Gastrocnemius medialis (tissue), 4 donors: ENCODE measurements at regions of chrX and their contacts with region 1.

Region 1: DNA sequence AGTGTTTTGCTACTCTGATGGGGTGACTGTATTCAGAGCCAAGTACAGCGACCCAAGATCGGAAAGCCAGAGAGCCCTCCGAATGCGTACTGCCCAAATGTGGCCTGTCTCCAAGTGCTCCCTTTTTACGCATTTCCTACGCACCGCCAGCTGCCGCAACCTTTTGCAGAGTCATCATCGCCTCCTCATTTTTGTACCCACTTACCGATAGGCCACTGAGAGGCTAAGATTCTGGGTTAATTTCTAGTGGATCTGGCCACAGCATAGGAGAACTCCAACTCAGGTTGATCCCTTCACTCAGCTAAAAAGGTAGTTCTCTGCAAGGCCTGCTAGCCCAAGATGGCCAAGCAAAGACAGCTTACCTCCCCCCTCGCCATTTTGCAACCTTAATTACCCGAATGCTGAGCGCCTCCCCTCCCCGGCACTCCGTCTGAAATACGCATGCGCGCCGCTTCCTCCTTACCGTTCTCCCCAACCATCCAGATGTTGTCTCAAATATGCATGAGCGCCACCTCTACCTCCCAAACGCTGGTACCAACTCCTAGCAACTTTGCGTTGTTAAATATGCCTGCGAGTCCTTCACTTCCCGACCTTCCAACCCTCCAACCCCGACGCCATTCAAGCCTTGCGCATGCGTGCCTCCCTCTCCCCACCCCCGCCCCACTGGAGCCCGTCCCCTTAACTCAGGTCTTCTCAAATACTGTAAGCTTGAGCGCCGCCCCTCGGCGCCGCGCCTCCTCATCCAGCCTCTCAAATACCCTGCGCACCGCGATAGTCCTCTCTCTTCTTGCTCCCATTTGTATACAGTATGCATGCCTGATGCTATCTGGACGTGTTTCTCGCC is 11.8 kb upstream of the ZCCHC13 start:
- DNase-seq: peak; percentile 75 to 89
- ATAC-seq: peak; percentile 80 to 82
- H3K4me3 ChIP-seq: peak overlapping the region; percentile 61 to 71 (median 67)
- H3K27ac ChIP-seq: peak overlapping the region; percentile 86 to 98 (median 93)
- H3K4me1 ChIP-seq: peaks cover 0 to 5% of the 10 kb centered on the region in 2 donors
- H3K27me3 ChIP-seq: no peaks in the 10 kb centered on the region
- CTCF ChIP-seq: peak in 1 of 5 experiments; percentile 11
- POLR2A ChIP-seq: peak; percentile 66 to 79

Region 2: DNA sequence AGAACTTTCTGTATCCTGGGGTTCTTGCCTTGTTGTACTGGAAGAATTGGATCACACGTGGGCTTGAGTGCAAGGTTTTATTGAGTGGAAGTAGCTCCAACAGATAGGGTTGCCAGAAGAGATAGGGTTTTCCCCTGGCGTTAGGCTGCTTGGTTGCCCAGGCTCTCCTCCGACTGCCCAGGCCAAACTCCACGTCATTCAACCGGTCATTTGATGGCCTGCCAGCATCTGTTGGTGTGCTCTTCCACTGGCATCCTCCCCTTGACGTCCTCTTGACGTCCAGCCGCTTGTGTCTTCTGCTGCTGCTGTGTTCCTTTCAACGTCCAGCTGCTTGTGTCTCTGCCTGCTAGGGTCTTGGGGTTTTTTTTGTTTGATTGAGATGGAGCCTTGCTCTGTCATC is 328.5 kb before region 1 on chrX:
- in situ Hi-C with region 1: no loop called
- intact Hi-C with region 1: loop called (anchors 5 kb)
- DNase-seq: peak; percentile 49 to 81
- ATAC-seq: peak; percentile 92 to 95
- H3K4me3 ChIP-seq: no peak overlapping the region
- H3K27ac ChIP-seq: peak overlapping the region; percentile 76 to 86 (median 80)
- H3K4me1 ChIP-seq: peaks cover 0 to 37% of the 10 kb centered on the region in 2 donors
- H3K27me3 ChIP-seq: no peaks in the 10 kb centered on the region
- CTCF ChIP-seq: no peak
- POLR2A ChIP-seq: peak in 1 of 2 donors; percentile 15

Region 3: GRCh38 chrX:74133156-74133796 is 158.9 kb before region 1 on chrX:
- in situ Hi-C with region 1: no loop called
- intact Hi-C with region 1: no loop called
- DNase-seq: no peak
- ATAC-seq: peak; percentile 72 to 77
- H3K4me3 ChIP-seq: no peak overlapping the region
- H3K27ac ChIP-seq: no peak overlapping the region
- H3K4me1 ChIP-seq: no peaks in the 10 kb centered on the region
- H3K27me3 ChIP-seq: no peaks in the 10 kb centered on the region
- CTCF ChIP-seq: peak; percentile 56 to 83 (median 70)
- POLR2A ChIP-seq: no peak

Region 4: GRCh38 chrX:74160358-74160757 is 131.8 kb before region 1 on chrX:
- in situ Hi-C with region 1: no loop called
- intact Hi-C with region 1: loop called (anchors 2 kb)
- DNase-seq: no peak
- ATAC-seq: peak; percentile 37 to 61
- H3K4me3 ChIP-seq: no peak overlapping the region
- H3K27ac ChIP-seq: peak overlapping the region; percentile 72 to 81 (median 75)
- H3K4me1 ChIP-seq: peaks cover 6 to 10% of the 10 kb centered on the region in 2 donors
- H3K27me3 ChIP-seq: no peaks in the 10 kb centered on the region
- CTCF ChIP-seq: no peak
- POLR2A ChIP-seq: no peak

Region 5: DNA sequence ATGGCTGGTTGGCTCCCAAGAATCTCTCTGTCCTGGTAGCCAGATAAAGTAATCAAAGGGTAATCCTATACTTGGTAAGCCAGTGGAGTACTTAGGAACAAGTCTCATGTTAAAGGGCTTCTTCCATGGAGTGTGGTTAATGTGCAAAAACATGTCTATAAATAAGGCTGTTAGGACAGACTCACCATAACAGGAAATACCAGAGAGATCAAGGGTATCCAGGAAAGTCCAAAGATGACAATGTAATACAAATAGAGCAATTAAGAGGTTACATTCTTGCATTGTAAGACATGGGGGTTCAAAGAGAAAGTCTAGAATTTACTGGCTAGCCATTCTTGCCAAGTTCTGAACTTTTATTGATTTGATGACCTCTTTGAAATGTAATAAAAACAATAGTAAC is 50.1 kb before region 1 on chrX:
- in situ Hi-C with region 1: no loop called
- intact Hi-C with region 1: loop called (anchors 2 kb)
- DNase-seq: no peak
- ATAC-seq: peak; percentile 53 to 82
- H3K4me3 ChIP-seq: no peak overlapping the region
- H3K27ac ChIP-seq: peak overlapping the region; percentile 64 to 76 (median 66)
- H3K4me1 ChIP-seq: peaks cover 0 to 21% of the 10 kb centered on the region in 2 donors
- H3K27me3 ChIP-seq: no peaks in the 10 kb centered on the region
- CTCF ChIP-seq: no peak
- POLR2A ChIP-seq: no peak

Region 6: DNA sequence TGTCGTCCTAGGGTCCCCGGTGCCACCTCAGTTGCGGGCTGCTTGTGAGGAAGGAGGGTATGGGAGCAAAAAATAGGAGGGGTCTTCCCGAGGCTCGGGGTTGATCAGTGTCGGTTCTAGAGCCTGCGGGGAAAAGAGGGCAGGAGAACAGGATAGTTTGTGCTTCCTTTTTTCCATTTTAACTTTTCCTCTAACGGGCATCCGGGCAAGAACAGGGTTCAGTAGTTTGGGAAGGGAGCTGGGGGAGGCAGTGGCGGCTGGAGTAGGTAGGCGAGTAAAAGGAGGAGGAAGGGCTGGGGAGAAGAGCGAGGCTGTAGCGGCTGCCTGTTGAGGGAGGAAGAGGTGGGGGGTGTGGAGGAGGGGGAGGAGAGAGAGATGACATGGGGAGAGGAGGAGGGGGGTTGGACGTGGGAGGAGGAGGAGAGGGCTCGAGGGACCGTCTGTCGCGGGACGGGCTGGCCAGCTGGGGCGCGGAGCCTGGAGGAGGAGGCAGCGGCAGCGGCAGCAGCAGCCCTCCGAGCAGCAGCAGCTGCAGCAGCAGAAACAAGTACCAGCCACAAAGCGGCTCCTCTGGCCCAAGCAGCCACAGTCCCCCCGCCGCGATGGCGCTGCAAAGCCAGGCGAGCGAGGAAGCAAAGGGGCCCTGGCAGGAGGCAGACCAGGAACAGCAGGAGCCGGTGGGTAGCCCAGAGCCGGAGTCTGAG is 129.0 kb after region 1 on chrX and contains the start of gene SLC16A2:
- in situ Hi-C with region 1: no loop called
- intact Hi-C with region 1: loop called (anchors 5 kb)
- DNase-seq: peak; percentile 41 to 53
- ATAC-seq: peak; percentile 70 to 76
- H3K4me3 ChIP-seq: peak within 1 kb of the TSS; percentile 55 to 61 (median 58)
- H3K27ac ChIP-seq: peak within 1 kb of the TSS; percentile 76 to 83 (median 80)
- H3K4me1 ChIP-seq: peaks cover 3 to 8% of the 10 kb centered on the region in 2 donors
- H3K27me3 ChIP-seq: peaks cover 0 to 2% (median 0%) of the 10 kb centered on the region in 3 donors
- CTCF ChIP-seq: no peak
- POLR2A ChIP-seq: no peak
- total RNA-seq, gene SLC16A2: 1.3 to 2.4 (median 2.1) TPM

Region 7: GRCh38 chrX:74536152-74536831 is 244.1 kb after region 1 on chrX:
- in situ Hi-C with region 1: no loop called
- intact Hi-C with region 1: loop called (anchors 2 kb)
- DNase-seq: peak; percentile 53 to 77
- ATAC-seq: peak; percentile 75 to 78
- H3K4me3 ChIP-seq: peak overlapping the region; percentile 62 to 69 (median 62)
- H3K27ac ChIP-seq: peak overlapping the region; percentile 89 to 93 (median 90)
- H3K4me1 ChIP-seq: peaks cover 6% of the 10 kb centered on the region in 2 donors
- H3K27me3 ChIP-seq: no peaks in the 10 kb centered on the region
- CTCF ChIP-seq: peak; percentile 18 to 60 (median 54)
- POLR2A ChIP-seq: no peak

Region 8: DNA sequence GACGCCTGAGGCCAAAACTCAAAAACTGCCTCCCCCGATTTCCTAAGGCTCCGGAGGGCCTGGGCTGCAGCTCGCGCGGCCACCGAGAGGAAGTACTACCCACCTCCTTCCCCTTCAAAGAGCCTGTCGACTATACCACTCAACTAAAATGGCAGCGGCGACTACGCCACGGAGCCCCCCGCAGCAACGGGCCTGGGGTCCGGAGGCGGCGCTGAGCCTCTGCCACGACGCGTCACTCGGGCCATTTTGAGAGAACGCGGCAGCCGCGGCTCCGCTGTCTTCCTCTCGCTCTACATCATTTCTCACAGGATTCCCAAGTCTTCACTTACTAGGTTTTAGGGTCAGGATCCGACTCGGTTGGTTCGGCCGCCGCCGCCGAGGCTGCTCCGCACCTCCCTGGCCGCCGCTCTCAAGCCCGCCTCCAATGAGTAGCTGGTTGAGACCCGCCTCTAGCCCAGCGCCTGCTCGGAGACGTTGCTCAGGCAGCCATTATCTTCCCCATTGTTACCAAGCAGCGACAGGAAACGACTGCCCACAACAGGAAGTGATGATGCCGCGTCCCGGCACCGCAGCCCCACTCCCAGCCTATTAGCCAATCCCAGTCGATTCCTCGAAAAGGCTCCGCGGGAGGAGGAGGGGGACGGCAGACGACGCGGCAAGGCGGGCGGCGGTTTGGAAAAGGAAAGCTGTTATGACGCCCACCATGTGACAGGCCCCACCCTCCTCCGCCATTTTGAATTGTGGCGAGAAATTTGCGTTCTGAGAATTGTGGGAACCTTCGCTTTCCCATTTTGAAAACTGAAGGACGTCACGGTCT is 322.1 kb after region 1 on chrX and contains the start of gene RLIM:
- in situ Hi-C with region 1: no loop called
- intact Hi-C with region 1: loop called (anchors 5 kb)
- DNase-seq: peak; percentile 90 to 94
- ATAC-seq: peak; percentile 95 to 96
- H3K4me3 ChIP-seq: peak within 1 kb of the TSS; percentile 59 to 86 (median 70)
- H3K27ac ChIP-seq: peak within 1 kb of the TSS; percentile 90 to 95 (median 93)
- H3K4me1 ChIP-seq: no peaks in the 10 kb centered on the region
- H3K27me3 ChIP-seq: peaks cover 0 to 3% (median 0%) of the 10 kb centered on the region in 3 donors
- CTCF ChIP-seq: no peak
- POLR2A ChIP-seq: peak; percentile 79 to 83
- total RNA-seq, gene RLIM: 15.3 to 26.7 (median 21.5) TPM